Activated CD8-positive, alpha-beta memory T cell treated with anti-CD3 and anti-CD28 coated beads, Interleukin-2, amount 10 ng/mL, durations not matched to agents 7 days and 5 days (primary cell): ENCODE measurements at regions of chr10 and their contacts with region 1.

Region 1: DNA sequence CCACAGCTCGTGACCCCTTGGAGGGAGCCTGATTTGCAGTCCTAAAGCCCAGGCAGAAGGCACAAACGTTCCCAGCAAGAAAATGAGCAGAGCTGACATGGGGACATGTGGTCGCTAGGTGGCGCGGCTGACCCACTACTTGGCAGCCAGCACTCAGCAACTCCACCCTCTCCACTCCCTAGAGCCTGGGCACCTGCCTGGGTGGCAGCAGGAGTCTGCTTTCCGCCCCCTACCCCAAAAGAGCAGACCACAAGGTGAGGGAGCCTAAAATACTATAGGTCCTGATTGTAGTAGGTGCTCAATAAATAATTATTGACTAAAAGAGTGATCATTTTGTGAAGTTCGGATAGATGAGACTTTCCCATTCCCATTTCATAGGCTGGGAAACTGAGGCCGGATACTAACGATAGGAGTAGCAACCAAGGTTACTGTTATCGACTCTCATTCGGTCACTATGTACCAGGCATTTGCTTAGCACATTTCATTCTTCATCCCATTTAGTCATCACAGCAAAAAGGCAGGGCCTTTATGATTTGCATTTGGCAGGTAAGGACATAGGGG is 57.4 kb downstream of the NEUROG3 start:
- DNase-seq: peak; percentile 84
- ATAC-seq: peak; percentile 95
- H3K4me3 Mint-ChIP-seq: no peak overlapping the region
- H3K27ac Mint-ChIP-seq: no peak overlapping the region
- H3K4me1 Mint-ChIP-seq: no peaks in the 10 kb centered on the region
- H3K27me3 Mint-ChIP-seq: peaks cover 46% of the 10 kb centered on the region

Region 2: GRCh38 chr10:69629897-69630650 is 114.3 kb after region 1 on chr10 and contains the start of gene FAM241B:
- CTCF ChIA-PET with region 1: interaction called, 235 read pairs
- DNase-seq: peak; percentile 83
- ATAC-seq: peak; percentile 95
- H3K4me3 Mint-ChIP-seq: peak within 1 kb of the TSS; percentile 32
- H3K27ac Mint-ChIP-seq: peak within 1 kb of the TSS; percentile 13
- H3K4me1 Mint-ChIP-seq: no peaks in the 10 kb centered on the region
- H3K27me3 Mint-ChIP-seq: peaks cover 2% of the 10 kb centered on the region
- total RNA-seq, gene FAM241B: 2.6 to 2.9 TPM

Region 3: DNA sequence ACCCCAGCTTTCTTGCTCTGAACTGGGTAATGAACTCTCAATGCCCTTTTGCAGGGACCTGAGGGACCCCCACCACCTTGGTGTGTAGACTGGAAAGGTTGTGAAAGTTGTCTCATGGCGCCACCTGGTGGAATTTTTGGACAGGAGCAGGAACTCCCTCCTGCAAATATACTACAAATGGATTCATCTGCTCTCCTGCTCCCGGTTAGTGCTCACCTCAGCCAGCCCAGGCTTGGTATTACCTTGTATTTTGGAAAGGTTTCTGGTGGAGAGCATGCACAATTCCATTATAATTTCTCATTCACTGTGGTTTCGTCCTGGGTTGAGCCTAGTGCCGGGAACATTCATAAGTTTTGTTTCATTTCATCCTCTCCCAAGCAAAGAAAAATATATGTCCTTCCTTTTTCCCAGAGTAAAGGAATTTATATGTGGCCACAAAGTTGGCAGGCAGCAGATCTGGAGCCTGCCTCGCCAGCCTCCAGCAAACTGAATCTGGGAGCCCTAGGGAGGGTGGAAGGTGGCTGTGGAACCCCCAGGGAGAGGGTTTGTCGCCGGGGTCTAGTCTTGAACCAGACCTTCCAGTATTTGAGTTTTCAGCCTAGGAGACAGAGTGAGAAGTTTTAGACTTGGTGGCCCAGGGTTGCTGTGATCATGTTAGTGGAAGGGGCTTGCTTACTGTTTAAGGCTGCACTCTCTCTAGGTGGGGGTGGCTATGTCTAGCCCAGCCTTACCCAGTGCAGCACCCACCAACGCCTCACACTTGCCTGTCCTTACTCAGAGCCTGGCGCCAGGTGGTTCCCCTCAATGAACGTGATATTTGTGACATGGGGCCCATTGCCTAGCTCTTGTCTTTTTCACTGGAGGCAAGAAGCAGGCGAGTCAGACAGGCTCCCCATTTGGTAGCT is 123.8 kb after region 1 on chr10:
- CTCF ChIA-PET with region 1: interaction called, 235 read pairs
- DNase-seq: peak; percentile 72
- ATAC-seq: peak; percentile 78
- H3K4me3 Mint-ChIP-seq: no peak overlapping the region
- H3K27ac Mint-ChIP-seq: no peak overlapping the region
- H3K4me1 Mint-ChIP-seq: no peaks in the 10 kb centered on the region
- H3K27me3 Mint-ChIP-seq: no peaks in the 10 kb centered on the region